PC-3 (cell line): ENCODE measurements at regions of chr19 and their contacts with region 1.

Region 1: DNA sequence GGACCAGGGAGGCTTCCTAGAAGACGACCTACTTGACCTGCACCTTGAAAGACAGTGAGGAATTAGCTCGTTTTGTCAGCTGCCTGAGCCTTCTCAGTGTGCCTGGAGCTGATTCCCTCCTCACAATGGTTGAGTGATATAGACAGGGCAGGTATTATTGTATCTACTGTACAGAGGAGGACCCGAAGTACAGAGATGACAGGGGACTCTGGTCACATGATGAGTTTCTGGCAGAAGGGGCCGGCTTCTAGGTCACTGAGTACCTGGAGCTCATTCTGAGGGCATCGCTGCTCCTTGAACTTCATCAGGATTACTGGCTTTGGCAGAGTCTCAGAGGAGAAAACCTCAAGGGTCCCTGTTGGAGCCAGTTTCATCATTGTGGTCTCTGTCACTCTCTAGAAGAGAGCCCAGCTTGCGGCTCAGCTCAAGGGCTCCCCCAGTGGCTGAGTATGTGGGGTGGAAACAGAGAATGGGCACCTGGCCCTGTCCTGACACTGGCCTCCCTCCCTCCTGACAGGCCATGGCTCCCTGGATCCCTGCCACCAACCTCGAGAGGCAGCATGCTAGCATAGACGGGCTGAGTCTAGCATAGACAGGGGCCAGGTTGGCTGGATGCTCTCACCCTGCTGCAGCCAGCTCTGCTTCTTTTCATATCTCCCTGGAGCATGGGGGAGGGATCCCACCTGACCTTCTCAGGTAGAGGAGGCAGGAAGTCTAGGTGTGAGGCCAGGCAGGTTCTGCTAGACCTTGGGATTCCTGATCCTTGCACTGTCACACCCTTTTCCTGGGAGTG is 38.7 kb downstream of the NFIX start:
- DNase-seq: peak; percentile 79
- ATAC-seq: peak; percentile 29
- H3K4me3 ChIP-seq: no peak overlapping the region
- H3K27ac ChIP-seq: peak overlapping the region; percentile 85
- H3K4me1 ChIP-seq: peaks cover 71% of the 10 kb centered on the region
- H3K27me3 ChIP-seq: no peaks in the 10 kb centered on the region
- CTCF ChIP-seq: peak; percentile 94

Region 2: DNA sequence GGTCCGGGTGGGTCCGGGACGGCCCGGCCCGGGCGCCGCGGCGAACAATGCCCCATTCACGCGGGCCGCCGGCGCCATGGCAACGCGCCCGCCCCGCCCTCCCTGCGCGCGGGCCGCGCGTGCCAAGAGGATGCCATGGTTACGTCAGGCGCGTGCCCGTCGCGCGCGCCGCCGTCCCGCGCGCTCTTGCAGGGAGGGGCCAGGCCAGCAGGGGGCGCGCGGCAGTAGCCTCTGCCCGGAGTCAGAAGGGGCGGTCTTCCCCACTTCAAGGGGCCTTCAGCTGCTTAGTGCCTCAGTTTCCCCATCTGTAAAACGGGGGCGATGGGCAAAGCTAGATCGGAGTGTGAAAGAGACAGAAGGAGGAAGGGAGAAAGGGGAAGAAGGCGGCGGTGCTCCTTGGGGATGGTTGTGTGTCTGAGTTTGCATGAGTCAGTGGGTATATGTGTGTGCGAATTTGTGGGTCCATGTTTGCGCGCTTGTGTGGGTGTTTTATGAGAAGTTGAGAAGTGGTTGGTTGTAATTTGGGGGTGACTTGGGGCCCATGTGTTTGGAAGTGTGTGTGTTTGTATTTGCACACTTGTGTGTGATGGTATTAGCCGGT is 50.4 kb before region 1 on chr19:
- CTCF ChIA-PET with region 1: interaction called, 4 read pairs
- POLR2A ChIA-PET with region 1: no interaction called
- intact Hi-C with region 1: loop called (anchors 1 kb)
- DNase-seq: peak; percentile 89
- ATAC-seq: peak; percentile 84
- H3K4me3 ChIP-seq: peak overlapping the region; percentile 61
- H3K27ac ChIP-seq: no peak overlapping the region
- H3K4me1 ChIP-seq: no peaks in the 10 kb centered on the region
- H3K27me3 ChIP-seq: no peaks in the 10 kb centered on the region
- CTCF ChIP-seq: peak; percentile 94

Region 3: DNA sequence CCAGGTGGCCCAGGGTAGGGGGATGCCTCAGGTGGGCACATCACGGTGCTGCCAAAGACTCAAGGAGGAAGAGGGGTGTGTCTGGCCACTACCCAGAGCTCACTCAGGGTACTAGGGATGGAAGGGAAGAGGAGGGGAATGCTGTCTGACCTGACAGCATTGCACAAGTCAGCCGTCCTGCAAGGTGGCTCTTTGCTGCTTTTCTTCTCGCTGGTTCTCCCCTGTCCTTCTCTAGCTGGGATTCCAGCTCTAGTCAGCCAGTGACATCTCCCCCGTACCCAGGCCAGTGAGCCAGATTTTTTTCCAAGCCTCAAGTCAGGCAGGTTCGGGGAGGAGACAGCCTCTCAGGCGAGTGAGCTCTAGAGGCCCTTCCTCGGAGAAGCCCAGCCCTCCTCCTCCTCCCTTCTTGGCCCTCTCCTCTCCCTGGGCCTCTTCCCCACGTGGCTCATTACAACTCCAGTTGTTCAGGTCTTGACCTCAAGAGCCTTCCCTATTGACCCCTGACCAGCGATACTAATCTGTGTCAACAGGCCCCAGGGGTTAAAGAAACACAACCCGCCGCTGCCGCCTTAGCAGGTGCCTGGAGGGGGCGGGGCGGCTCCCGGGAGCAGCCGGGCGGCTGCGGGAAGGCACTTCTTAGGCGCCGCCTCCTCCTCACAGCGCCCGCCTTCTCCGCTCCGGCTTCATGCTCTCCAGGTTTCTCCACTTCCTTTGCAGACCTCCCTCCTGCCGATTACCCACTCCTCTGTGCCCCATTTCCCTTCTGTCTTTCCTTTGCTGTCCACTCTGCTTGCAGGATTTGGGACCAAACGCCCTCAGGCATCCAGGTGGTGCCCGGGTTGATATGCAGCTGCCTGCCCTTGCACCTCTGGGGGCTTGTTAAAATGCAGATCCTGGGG is 17.5 kb after region 1 on chr19:
- CTCF ChIA-PET with region 1: interaction called, 13 read pairs
- POLR2A ChIA-PET with region 1: interaction called, 13 read pairs
- intact Hi-C with region 1: loop called (anchors 1 kb)
- DNase-seq: peak; percentile 84
- ATAC-seq: peak; percentile 14
- H3K4me3 ChIP-seq: peak overlapping the region; percentile 43
- H3K27ac ChIP-seq: peak overlapping the region; percentile 99
- H3K4me1 ChIP-seq: peaks cover 65% of the 10 kb centered on the region
- H3K27me3 ChIP-seq: no peaks in the 10 kb centered on the region
- CTCF ChIP-seq: no peak